ENCODE measurements at regions of chr7 and their contacts with region 1.

Region 1: DNA sequence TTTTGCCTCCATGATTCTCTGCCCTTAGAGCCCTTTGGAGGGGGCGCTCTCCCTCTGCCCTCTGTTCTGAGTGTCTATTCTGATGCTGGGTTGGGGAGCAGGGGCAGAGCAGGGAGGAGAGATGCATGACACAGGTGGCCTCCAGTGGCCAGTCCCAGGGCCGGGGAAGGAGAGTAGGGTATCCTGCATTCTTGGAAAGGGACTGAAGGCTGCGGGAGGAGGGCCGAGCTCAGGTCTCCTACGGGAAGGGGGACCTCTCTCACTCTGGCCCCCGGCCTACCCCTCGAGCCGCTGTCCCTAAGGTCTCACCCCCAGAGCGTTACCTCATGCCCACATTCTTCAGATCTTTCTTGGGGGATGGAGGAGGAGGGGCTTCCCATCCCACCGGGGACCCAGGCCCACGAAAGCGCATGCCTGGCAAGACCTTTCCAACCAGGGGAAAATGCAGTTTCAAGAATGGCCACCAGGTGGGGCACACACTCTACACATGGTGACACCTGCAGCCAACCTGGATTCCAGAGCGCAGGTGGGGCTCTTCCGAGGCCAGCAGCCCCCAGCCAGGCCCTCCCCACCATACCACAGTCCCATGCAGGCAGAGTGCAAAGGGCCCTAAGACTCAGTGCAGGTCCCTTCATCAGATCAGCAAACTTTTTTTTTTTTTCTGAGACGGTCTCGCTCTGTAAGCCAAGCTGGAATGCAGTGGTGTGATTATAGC is 86.4 kb downstream of the MYL10 start:
- DNase-seq: peak; percentile 54 to 67
- ATAC-seq: peak; percentile 57 to 71
- H3K4me3 ChIP-seq: no peak overlapping the region
- H3K27ac ChIP-seq: peak overlapping the region in 1 of 2 experiments; percentile 39; a peak in 1 of 6 replicates
- H3K4me1 ChIP-seq: no peaks in the 10 kb centered on the region
- CTCF ChIP-seq: peak; percentile 91
- EP300 ChIP-seq: no peak
- POLR2A ChIP-seq: no peak
- RAD21 ChIP-seq: peak; percentile 97

Region 2: DNA sequence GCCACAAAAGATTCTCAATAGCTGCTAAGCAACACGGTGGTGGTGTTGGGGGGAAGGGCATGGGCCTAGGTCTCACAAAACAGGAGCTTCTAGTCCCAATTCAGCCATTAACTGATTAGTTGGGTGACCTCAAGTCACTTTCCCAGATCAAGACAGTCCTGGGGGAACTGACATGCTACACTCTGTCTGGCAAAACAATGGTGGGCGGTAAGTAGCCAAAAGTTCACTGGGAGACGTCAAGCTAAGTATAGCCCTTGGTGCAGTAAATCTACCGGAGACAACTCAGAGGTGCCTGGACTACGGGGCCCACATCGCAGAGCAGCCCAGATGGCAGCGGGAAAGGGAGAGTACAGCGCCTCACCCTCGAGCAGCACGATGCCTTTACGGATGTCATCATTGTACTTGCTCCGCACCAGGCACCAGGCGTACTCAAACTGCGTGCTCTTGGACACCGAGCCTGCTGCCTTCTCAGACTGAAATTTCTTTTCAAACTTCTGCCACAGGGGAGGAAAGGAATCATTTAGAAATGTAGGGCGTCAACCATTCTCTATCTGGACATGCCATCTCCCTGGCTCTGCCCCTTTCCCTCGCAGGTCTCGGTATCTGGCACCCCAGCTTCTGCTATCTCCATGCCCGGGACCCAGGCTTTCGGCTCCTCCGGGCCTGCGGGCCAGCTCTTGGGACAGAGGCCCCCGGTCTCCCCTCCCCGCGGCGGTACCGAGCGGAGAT is 298.9 kb before region 1 on chr7:
- CTCF ChIA-PET with region 1: no interaction called
- POLR2A ChIA-PET with region 1: no interaction called
- DNase-seq: no peak
- ATAC-seq: peak in 1 of 2 experiments; percentile 1; a peak in 2 of 6 replicates
- H3K4me3 ChIP-seq: peak overlapping the region; percentile 88
- H3K27ac ChIP-seq: peak overlapping the region; percentile 86 to 93
- H3K4me1 ChIP-seq: peaks cover 15% of the 10 kb centered on the region
- CTCF ChIP-seq: no peak
- EP300 ChIP-seq: no peak
- POLR2A ChIP-seq: no peak
- RAD21 ChIP-seq: no peak

Region 3: GRCh38 chr7:101558742-101559325 is 16.1 kb after region 1 on chr7:
- CTCF ChIA-PET with region 1: interaction called, 30 read pairs
- POLR2A ChIA-PET with region 1: no interaction called
- DNase-seq: no peak
- ATAC-seq: peak; percentile 69 to 77
- H3K4me3 ChIP-seq: no peak overlapping the region
- H3K27ac ChIP-seq: no peak overlapping the region
- H3K4me1 ChIP-seq: no peaks in the 10 kb centered on the region
- CTCF ChIP-seq: no peak; the same call in 2 of the 3 replicates
- EP300 ChIP-seq: no peak
- POLR2A ChIP-seq: no peak
- RAD21 ChIP-seq: peak in 1 of 2 experiments; percentile 24; a peak in 1 of 5 replicates

Region 4: GRCh38 chr7:101586078-101586905 is 43.6 kb after region 1 on chr7:
- CTCF ChIA-PET with region 1: interaction called, 10 read pairs
- POLR2A ChIA-PET with region 1: no interaction called
- DNase-seq: no peak
- ATAC-seq: no peak
- H3K4me3 ChIP-seq: no peak overlapping the region
- H3K27ac ChIP-seq: no peak overlapping the region
- H3K4me1 ChIP-seq: peaks cover 12% of the 10 kb centered on the region; the same call in 2 of the 3 replicates
- CTCF ChIP-seq: no peak
- EP300 ChIP-seq: no peak
- POLR2A ChIP-seq: no peak
- RAD21 ChIP-seq: no peak

Region 5: GRCh38 chr7:102272075-102272917 is 729.6 kb after region 1 on chr7:
- CTCF ChIA-PET with region 1: interaction called, 106 read pairs
- POLR2A ChIA-PET with region 1: no interaction called
- DNase-seq: peak; percentile 81 to 91
- ATAC-seq: peak; percentile 70 to 90
- H3K4me3 ChIP-seq: no peak overlapping the region
- H3K27ac ChIP-seq: peak overlapping the region; percentile 3 to 83; a peak in 4 of 6 replicates
- H3K4me1 ChIP-seq: peaks cover 29% of the 10 kb centered on the region
- CTCF ChIP-seq: peak; percentile 95
- EP300 ChIP-seq: no peak
- POLR2A ChIP-seq: no peak
- RAD21 ChIP-seq: peak; percentile 98